ENCODE measurements at regions of chrX and their contacts with region 1.

Region 1: DNA sequence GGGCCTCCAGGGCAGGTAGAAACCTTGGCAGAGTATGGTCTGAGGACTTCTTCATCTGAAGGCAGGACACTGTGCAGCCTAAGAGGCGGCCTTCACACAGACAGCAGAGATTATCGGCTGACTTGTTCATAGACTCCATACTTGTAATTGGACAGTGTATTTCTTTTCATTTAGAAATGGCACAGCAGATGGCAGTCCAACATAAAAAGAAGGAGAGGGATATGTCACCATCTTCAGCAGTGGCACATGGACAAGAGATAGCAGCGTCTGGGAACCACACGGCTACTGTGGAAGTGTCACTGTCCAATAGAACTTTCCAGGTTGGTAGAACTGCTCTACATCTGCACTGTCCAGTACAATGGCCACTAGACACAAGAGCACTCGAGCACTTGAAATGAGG is 21.7 kb upstream of the GEMIN8 start:
- DNase-seq: no peak
- H3K4me3 ChIP-seq: no peak overlapping the region
- H3K27ac ChIP-seq: no peak overlapping the region
- H3K4me1 ChIP-seq: no peaks in the 10 kb centered on the region
- H3K27me3 ChIP-seq: peaks cover 0 to 6% (median 0%) of the 10 kb centered on the region in 4 donors
- CTCF ChIP-seq: peak in 2 of 3 experiments; percentile 9 to 23
- EP300 ChIP-seq: no peak
- POLR2A ChIP-seq: no peak

Region 2: GRCh38 chrX:13985697-13986435 is 65.5 kb before region 1 on chrX:
- intact Hi-C with region 1: no loop called
- DNase-seq: no peak
- H3K4me3 ChIP-seq: no peak overlapping the region
- H3K27ac ChIP-seq: no peak overlapping the region
- H3K4me1 ChIP-seq: no peaks in the 10 kb centered on the region
- H3K27me3 ChIP-seq: no peaks in the 10 kb centered on the region
- CTCF ChIP-seq: no peak
- EP300 ChIP-seq: no peak
- POLR2A ChIP-seq: no peak

Region 3: GRCh38 chrX:15143050-15143824 is 1091.8 kb after region 1 on chrX:
- intact Hi-C with region 1: loop called (anchors 5 kb)
- DNase-seq: no peak
- H3K4me3 ChIP-seq: no peak overlapping the region
- H3K27ac ChIP-seq: no peak overlapping the region
- H3K4me1 ChIP-seq: no peaks in the 10 kb centered on the region
- H3K27me3 ChIP-seq: no peaks in the 10 kb centered on the region
- CTCF ChIP-seq: peak; percentile 54 to 65 (median 60)
- EP300 ChIP-seq: no peak
- POLR2A ChIP-seq: no peak